PC-3 (cell line): ENCODE measurements at regions of chr6 and their contacts with region 1.

Region 1: DNA sequence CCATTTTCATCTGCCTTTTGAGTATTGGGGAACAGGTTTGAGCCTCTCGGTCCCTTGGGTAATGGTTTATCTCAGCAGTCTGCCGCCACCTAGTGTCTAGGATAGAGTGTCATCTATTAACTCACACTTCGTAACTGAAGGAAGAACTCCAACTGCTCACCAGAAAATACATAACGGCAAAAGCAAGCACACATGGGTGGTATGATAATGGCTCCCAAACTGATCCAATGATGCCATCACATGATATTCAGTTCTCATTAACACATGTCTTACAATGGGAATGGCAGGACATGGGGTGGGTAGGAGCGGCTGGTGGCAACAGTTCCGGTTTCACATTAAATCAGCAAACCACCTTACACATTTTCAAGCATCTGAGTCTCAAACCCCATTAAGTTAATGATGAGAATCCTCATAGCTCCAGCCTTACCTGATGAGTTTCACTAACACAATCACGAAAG is 110.7 kb upstream of the PHACTR1 start:
- DNase-seq: peak; percentile 82
- ATAC-seq: peak; percentile 72
- H3K4me3 ChIP-seq: no peak overlapping the region
- H3K27ac ChIP-seq: no peak overlapping the region
- H3K4me1 ChIP-seq: peaks cover 15% of the 10 kb centered on the region
- H3K27me3 ChIP-seq: no peaks in the 10 kb centered on the region
- CTCF ChIP-seq: peak; percentile 91

Region 2: DNA sequence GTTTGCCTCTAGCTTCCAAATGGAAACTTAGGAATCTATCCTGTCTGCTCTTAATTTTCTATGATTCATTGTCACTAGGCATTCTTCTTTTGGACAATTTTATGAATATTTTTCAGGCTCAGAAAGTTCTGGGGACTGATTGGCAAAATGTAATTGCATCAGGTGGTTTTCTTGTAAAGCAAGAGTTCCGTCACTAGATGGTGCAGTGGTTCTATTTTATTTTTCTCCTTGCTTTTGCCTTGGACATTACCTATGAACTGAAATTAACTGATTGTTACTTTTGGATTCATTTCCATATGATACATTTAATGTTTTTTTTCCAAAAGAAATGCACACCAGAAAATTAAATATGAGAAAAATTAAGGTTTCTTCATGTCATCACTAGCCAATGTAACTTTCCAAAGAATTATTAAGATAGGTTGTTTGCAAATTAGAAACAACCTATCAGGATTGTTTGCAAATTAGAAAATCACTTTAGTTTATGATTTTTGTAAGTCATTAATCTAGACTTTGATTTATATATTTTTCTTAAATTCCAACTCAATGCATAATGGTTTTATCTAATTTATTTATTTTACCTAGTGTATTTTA is 1020.4 kb before region 1 on chr6:
- CTCF ChIA-PET with region 1: no interaction called
- POLR2A ChIA-PET with region 1: no interaction called
- intact Hi-C with region 1: loop called (anchors 5 kb)
- DNase-seq: peak; percentile 80
- ATAC-seq: peak; percentile 29; the same call in 1 of the 2 replicates
- H3K4me3 ChIP-seq: no peak overlapping the region
- H3K27ac ChIP-seq: no peak overlapping the region
- H3K4me1 ChIP-seq: peaks cover 11% of the 10 kb centered on the region
- H3K27me3 ChIP-seq: no peaks in the 10 kb centered on the region
- CTCF ChIP-seq: peak; percentile 83

Region 3: GRCh38 chr6:12150812-12151432 is 455.0 kb before region 1 on chr6:
- CTCF ChIA-PET with region 1: no interaction called
- POLR2A ChIA-PET with region 1: no interaction called
- intact Hi-C with region 1: loop called (anchors 1 kb)
- DNase-seq: peak; percentile 72
- ATAC-seq: peak; percentile 35; the same call in 1 of the 2 replicates
- H3K4me3 ChIP-seq: no peak overlapping the region
- H3K27ac ChIP-seq: peak overlapping the region; percentile 80
- H3K4me1 ChIP-seq: peaks cover 41% of the 10 kb centered on the region
- H3K27me3 ChIP-seq: no peaks in the 10 kb centered on the region
- CTCF ChIP-seq: peak; percentile 94

Region 4: GRCh38 chr6:12313992-12314805 is 291.7 kb before region 1 on chr6:
- CTCF ChIA-PET with region 1: interaction called, 3 read pairs
- POLR2A ChIA-PET with region 1: no interaction called
- intact Hi-C with region 1: loop called (anchors 1 kb)
- DNase-seq: peak; percentile 96
- ATAC-seq: peak; percentile 78
- H3K4me3 ChIP-seq: no peak overlapping the region
- H3K27ac ChIP-seq: peak overlapping the region; percentile 80
- H3K4me1 ChIP-seq: peaks cover 21% of the 10 kb centered on the region
- H3K27me3 ChIP-seq: no peaks in the 10 kb centered on the region
- CTCF ChIP-seq: no peak

Region 5: GRCh38 chr6:12490904-12491571 is 114.9 kb before region 1 on chr6:
- CTCF ChIA-PET with region 1: no interaction called
- POLR2A ChIA-PET with region 1: no interaction called
- intact Hi-C with region 1: loop called (anchors 5 kb)
- DNase-seq: peak; percentile 94
- ATAC-seq: peak; percentile 72
- H3K4me3 ChIP-seq: no peak overlapping the region
- H3K27ac ChIP-seq: peak overlapping the region; percentile 84
- H3K4me1 ChIP-seq: peaks cover 33% of the 10 kb centered on the region
- H3K27me3 ChIP-seq: no peaks in the 10 kb centered on the region
- CTCF ChIP-seq: no peak

Region 6: DNA sequence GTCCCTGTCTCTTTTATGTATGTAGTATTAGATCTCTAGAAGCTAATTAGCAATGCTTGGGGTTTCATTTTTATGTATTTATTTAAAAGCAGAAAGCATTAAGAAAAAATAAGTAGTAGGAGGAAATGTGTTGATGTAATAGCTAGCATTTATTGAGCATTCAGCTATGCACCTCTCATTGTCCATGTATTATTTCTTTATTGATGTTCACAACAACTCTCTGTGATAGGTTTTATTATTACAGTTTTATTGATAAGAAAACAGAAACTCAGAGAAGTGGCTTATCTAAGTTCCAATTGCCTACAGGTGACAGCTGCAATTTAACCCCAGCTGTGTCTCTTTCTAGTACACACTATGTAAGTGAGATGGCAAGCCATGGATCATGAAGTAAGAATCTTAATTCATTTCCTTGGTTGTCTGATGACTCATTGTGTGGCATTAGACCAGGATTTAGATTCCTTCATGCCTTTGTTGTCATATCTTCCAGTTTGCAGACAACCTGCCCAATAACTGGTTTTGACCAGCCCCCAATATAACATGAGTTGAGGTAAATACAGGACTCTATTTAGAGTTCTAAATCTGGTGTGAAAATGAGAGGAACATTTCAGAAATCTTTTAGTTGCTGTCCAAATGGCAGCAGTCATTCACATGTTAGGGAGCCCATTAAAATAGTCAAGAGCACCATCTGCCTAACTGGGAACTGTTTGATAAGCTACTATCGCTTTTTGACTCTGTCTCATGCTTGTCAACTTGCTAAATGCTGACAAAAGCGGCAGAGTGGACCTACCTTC is 60.1 kb before region 1 on chr6:
- CTCF ChIA-PET with region 1: no interaction called
- POLR2A ChIA-PET with region 1: no interaction called
- intact Hi-C with region 1: no loop called
- DNase-seq: peak; percentile 93
- ATAC-seq: peak; percentile 92
- H3K4me3 ChIP-seq: no peak overlapping the region
- H3K27ac ChIP-seq: no peak overlapping the region
- H3K4me1 ChIP-seq: peaks cover 15% of the 10 kb centered on the region
- H3K27me3 ChIP-seq: no peaks in the 10 kb centered on the region
- CTCF ChIP-seq: no peak